Activated naive CD4-positive, alpha-beta T cell treated with anti-CD3 and anti-CD28 coated beads for 36 hours (primary cell): ENCODE measurements at regions of chr2 and their contacts with region 1.

Region 1: DNA sequence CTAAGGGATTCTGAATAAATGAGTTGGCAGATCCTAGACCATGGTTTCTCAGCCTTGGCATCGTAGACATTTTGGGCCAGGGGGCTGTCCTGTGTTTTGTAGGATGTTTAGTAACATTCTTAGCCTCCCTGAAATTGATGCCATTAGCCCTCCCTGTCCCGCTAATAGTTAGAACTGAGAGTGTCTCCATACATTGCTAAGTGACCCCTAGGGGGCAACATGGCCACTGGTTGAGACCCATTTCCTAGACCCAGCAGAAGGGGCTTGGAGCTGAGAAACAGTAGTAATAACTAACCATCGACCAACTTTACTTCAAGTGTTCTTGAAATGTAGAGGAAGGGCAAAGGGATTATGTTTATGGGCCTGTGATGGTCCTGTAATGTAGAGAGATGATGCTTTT is 40.8 kb downstream of the KCMF1 start:
- DNase-seq: no peak
- H3K4me3 Mint-ChIP-seq: no peak overlapping the region
- H3K27ac Mint-ChIP-seq: peak overlapping the region; percentile 89
- H3K4me1 Mint-ChIP-seq: peaks cover 86% of the 10 kb centered on the region
- H3K27me3 Mint-ChIP-seq: no peaks in the 10 kb centered on the region

Region 2: GRCh38 chr2:84939426-84940087 is 72.2 kb before region 1 on chr2:
- CTCF ChIA-PET with region 1: interaction called, 9 read pairs
- intact Hi-C with region 1: loop called (anchors 1 kb)
- DNase-seq: peak; percentile 78
- H3K4me3 Mint-ChIP-seq: peak overlapping the region; percentile 72
- H3K27ac Mint-ChIP-seq: peak overlapping the region; percentile 99
- H3K4me1 Mint-ChIP-seq: peaks cover 75% of the 10 kb centered on the region
- H3K27me3 Mint-ChIP-seq: no peaks in the 10 kb centered on the region

Region 3: DNA sequence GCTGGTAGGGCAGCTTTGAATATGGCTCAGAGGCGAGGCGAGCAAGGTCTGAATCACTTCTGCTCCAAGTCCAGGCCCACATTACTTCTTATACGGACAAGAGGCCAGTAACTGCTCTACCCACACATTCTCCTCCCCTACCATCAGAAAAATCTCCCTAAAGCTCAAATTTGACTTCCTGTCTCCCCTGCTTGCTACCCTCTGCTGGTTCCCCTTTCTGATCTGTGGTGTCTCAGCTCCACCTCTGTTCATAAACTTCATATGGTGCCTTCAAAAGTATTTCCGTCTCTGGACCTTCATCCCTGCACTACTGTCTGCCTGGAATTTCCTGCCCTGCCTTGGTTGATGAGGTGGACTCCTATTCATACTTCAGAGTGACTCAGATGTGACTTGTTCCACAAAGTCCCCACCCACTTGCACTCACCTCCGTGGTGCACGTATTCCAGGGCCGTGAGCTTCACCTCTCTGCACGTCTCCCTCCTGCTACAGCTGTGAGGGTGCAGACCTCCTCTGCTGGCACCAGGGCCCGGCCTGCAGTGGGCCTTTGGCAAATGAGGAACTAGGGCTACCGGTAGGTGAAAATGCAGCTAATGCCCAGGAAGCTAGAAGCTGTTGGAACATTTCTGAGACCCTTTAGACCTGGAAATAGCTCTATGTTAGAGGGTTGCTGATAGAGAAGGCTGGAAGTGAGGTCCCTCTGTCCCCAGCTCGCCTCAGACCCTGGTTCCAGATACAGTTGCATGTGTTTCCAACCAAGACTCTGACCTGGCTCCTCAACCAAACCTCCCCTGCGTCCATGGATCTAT is 65.3 kb before region 1 on chr2:
- CTCF ChIA-PET with region 1: interaction called, 26 read pairs
- intact Hi-C with region 1: loop called (anchors 1 kb)
- DNase-seq: peak; percentile 86
- H3K4me3 Mint-ChIP-seq: peak overlapping the region; percentile 62
- H3K27ac Mint-ChIP-seq: peak overlapping the region; percentile 92
- H3K4me1 Mint-ChIP-seq: peaks cover 49% of the 10 kb centered on the region
- H3K27me3 Mint-ChIP-seq: no peaks in the 10 kb centered on the region

Region 4: GRCh38 chr2:84958135-84959044 is 53.4 kb before region 1 on chr2:
- CTCF ChIA-PET with region 1: no interaction called
- intact Hi-C with region 1: no loop called
- DNase-seq: no peak
- H3K4me3 Mint-ChIP-seq: no peak overlapping the region
- H3K27ac Mint-ChIP-seq: peak overlapping the region; percentile 50
- H3K4me1 Mint-ChIP-seq: peaks cover 32% of the 10 kb centered on the region
- H3K27me3 Mint-ChIP-seq: no peaks in the 10 kb centered on the region